ENCODE measurements at regions of chrX and their contacts with region 1.

Region 1: DNA sequence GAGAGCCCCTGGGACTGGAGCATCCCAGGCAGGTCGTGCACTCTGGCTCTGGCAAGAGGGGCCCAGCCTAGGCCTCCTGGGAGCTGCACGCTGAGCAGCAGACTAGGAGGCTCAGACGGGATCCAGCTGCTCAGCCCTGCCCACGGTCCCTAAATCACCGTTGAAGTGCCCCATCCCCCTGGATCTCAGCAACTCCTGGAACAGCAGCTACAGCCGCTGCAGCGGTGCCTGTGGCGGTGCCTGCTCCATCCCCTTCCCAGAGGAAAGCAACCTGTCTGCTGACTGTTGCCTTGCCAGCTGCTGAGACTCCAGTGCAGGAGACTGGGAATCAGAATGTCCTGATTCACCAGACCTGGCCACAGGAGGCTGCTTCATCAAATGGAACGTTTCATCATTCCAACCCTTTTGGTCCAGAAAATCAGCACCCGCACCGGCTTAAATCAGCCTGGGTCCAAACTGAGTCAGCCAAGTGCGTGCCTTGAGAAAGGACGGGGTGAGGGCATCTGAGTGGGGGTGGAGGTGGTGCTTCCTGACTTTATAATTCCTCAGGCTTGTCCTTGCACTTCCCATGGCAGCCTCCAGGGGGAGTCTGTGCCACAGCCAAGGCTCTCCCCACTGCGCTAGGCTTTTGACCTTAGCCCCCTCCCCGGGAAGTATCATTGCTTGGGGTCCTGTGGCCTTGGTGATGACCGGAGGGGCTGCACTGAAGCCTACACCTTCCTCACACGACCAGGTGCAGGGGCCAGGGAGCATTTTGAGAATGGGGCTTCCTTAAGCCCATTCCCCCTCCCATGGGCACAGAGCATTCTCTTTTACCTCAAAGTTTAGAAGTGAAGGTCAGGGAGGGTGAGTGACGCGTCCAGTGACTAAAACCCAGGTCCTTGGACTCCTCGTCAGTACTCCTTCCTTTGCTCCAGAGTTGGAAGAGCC is 6.5 kb downstream of the ZNF185 start:
- DNase-seq: peak; percentile 44 to 75
- ATAC-seq: peak; percentile 52 to 89; a peak in 5 of 6 replicates
- H3K4me3 ChIP-seq: no peak overlapping the region
- H3K27ac ChIP-seq: peak overlapping the region in 1 of 2 experiments; percentile 24; a peak in 1 of 6 replicates
- H3K4me1 ChIP-seq: peaks cover 5% of the 10 kb centered on the region; the same call in 2 of the 3 replicates
- CTCF ChIP-seq: peak; percentile 51
- EP300 ChIP-seq: no peak
- POLR2A ChIP-seq: no peak
- RAD21 ChIP-seq: peak; percentile 35 to 44; a peak in 2 of 5 replicates

Region 2: DNA sequence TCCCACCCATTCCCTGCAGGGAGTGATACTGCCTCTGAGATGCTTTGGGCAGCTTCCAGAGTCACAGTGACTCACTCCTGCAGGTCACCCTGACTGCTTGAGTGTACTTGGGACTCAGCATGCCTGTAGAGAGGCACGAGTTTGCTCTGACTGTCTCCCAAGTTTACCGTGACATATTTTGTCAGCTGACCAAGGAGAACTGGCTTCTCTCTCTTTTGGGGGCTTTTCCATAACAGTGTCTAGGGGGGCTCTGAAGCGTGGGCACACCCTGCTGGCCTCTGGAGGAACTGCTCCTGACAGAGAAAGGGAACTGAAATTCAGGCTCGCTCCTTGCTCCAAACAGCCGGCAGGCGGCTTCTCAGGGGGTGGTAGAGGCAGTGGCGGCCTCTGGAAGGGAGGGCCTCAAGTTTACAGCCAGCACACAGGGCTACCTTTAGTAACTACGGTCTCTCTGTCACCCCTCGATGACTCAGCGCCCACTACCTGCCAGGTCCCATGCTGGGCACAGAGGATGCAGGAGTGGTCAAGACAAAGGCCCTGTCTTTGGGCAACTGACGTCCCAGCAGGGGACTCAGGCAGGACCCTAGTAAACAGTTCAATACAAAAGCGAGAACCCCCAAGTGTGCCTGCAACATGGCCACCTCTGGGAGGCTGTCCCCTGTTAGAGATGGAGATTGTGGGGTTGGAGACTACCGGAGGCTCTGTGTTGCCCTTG is 11.3 kb after region 1 on chrX:
- CTCF ChIA-PET with region 1: interaction called, 17 read pairs
- POLR2A ChIA-PET with region 1: no interaction called
- DNase-seq: peak; percentile 37 to 51
- ATAC-seq: peak; percentile 69 to 86
- H3K4me3 ChIP-seq: no peak overlapping the region
- H3K27ac ChIP-seq: peak overlapping the region; percentile 21 to 62; a peak in 2 of 6 replicates
- H3K4me1 ChIP-seq: peaks cover 9% of the 10 kb centered on the region; the same call in 2 of the 3 replicates
- CTCF ChIP-seq: peak; percentile 45
- EP300 ChIP-seq: no peak
- POLR2A ChIP-seq: no peak
- RAD21 ChIP-seq: peak; percentile 21 to 45; a peak in 2 of 5 replicates

Region 3: DNA sequence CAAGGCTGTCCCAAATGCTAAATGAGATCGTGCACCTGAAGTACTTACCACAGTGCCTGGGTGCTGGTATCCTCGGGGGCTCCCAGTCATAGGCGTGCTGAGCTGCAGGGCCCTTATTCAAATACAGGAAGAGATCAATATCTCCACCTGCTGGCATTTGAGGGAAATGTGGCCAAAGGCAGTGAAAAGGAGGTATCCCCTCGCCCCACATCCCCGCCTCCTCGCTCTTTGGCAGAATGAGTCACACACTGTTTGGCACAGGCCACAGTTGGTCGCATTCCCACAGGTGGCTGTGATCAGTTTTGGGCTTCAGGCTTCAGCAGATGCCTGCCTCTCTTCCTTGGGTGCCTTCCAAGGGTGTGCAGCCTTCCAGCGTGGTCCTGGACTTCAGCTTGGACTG is 21.9 kb after region 1 on chrX:
- CTCF ChIA-PET with region 1: interaction called, 15 read pairs
- POLR2A ChIA-PET with region 1: no interaction called
- DNase-seq: peak; percentile 64 to 75
- ATAC-seq: peak; percentile 77 to 93
- H3K4me3 ChIP-seq: no peak overlapping the region
- H3K27ac ChIP-seq: no peak overlapping the region
- H3K4me1 ChIP-seq: 0 out of 3 replicates have a peak, but pooled peaks cover 6% of the 10 kb centered on the region
- CTCF ChIP-seq: peak; percentile 49
- EP300 ChIP-seq: no peak
- POLR2A ChIP-seq: no peak
- RAD21 ChIP-seq: peak; percentile 51 to 57

Region 4: DNA sequence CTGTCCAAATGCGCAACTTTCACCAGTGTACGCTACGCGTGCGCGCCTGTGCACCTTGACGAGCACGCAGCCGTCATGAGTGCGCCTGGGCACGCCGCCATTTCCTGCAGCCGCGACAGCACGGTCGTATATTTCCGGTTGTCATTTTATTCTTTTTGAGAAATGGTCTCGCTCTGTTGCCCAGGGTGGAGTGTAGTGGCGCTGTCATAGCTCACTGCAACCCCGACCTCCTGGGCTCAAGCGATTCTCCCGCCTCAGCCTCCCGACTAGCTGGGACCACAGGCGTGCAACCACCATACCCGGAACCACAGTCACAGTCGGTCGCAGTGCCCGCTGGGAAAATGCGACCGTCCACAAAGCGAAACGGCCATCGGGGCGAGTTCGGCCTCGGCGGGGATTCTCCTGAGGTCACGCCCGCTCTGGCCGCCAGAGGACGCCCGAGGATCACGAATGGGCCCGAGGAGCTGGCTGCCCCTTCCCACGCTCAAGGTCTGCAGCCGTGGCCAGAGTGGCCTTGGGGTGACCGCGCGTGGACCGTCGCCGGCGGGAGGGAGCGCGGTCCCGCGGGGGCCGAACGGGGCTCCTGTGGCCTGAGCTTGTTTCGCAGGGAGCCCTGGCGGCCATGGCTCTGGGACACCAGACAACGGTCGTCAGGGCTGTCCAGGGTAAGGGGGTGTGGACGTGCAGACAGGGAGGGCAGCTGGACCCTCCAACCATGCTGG is 128.1 kb after region 1 on chrX:
- CTCF ChIA-PET with region 1: no interaction called
- POLR2A ChIA-PET with region 1: no interaction called
- DNase-seq: peak; percentile 55 to 77
- ATAC-seq: peak; percentile 80 to 90
- H3K4me3 ChIP-seq: peak overlapping the region; percentile 34; the same call in 2 of the 3 replicates
- H3K27ac ChIP-seq: peak overlapping the region in 1 of 2 experiments; percentile 44; a peak in 2 of 6 replicates
- H3K4me1 ChIP-seq: no peaks in the 10 kb centered on the region
- CTCF ChIP-seq: peak; percentile 80
- EP300 ChIP-seq: no peak
- POLR2A ChIP-seq: no peak
- RAD21 ChIP-seq: peak; percentile 88 to 97